Activated CD4-positive, alpha-beta memory T cell treated with anti-CD3 and anti-CD28 coated beads, Interleukin-2, amount 10 ng/mL, durations not matched to agents 7 days and 5 days (primary cell): ENCODE measurements at regions of chr15 and their contacts with region 1.

Region 1: DNA sequence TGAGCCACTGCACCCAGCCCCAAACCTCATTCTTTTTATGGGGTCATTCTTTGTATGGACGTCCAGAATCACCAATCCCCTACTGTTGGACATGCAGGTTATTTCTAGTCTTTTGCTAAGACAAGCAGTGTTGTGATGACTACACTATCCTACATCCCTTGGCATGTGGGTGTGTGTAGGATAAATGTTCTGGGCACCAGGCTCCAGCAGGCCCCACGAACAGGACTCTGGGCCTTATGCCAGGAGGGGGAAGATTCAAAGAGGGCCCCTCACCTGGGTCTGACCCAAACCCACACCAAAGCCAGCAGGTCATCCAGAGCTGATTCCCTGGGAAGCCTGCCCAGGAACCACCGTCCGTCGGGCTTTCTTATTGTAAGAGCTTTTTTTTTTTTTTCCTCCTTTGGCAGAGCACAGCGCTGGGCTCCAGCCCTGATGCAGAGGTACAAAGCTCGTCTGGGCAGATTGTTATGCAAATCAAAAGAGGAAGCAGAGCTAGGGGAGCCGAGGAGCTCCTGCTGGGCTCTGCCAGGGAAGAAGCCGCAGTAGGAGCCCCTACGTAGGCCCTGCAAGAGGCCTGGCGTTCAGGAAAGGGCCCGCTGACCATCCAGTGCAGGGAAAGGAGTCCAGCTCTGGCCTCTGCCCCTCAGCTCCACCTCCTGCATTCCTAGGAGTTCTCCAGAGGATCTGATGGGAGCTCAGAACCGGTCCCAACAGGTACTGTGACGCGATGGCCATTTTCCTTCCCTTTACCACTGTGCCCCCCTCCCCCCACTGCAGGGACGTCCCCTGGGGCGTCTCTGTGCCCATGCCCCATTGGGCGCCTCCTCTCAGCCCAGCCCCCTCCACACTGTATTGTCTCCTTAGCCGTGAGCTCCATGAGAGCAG is 29.0 kb upstream of the FURIN start:
- DNase-seq: no peak
- H3K4me3 Mint-ChIP-seq: peak overlapping the region; percentile 79
- H3K27ac Mint-ChIP-seq: peak overlapping the region; percentile 90
- H3K4me1 Mint-ChIP-seq: peaks cover 83% of the 10 kb centered on the region
- H3K27me3 Mint-ChIP-seq: no peaks in the 10 kb centered on the region

Region 2: DNA sequence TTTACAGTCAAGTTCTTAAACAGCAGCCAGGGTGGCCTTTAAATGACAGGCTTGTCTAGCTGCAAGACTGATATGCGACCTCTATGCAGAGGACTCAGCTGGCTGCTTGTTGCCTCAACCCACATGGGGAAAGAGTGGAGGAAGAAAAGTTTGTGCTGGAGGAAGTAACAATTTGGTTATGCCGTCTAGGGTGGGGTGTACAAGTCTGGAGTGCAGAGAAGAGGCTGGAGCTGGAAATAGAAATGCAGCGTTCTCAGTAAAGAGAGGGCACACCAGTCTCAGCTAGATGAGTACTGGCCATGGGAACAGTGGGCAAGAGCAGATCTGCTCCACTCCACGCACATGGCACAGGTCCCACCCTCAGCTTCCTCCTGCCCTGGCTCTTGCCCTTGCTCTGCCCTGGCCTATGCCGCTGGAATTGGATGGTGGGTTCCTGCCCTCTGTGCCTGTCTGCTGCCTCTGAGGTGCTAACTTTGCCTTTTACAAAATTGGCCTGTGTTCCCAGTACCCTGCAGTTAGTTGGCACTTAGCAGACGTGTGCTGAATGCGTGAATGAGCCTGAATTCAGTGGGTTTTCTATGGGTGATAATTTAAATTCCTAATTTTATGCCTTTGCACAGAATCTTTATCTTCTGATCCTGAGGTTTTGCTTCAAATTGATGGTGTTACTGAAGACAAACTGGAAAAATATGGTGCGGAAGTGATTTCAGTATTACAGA is 30.8 kb before region 1 on chr15:
- CTCF ChIA-PET with region 1: interaction called, 3 read pairs
- POLR2A ChIA-PET with region 1: interaction called, 120 read pairs
- DNase-seq: no peak
- H3K4me3 Mint-ChIP-seq: no peak overlapping the region
- H3K27ac Mint-ChIP-seq: peak overlapping the region; percentile 86
- H3K4me1 Mint-ChIP-seq: peaks cover 69% of the 10 kb centered on the region
- H3K27me3 Mint-ChIP-seq: no peaks in the 10 kb centered on the region

Region 3: GRCh38 chr15:90851114-90851513 is 11.7 kb after region 1 on chr15:
- CTCF ChIA-PET with region 1: interaction called, 20 read pairs
- POLR2A ChIA-PET with region 1: interaction called, 153 read pairs
- DNase-seq: peak; percentile 80
- H3K4me3 Mint-ChIP-seq: peak overlapping the region; percentile 63
- H3K27ac Mint-ChIP-seq: peak overlapping the region; percentile 91
- H3K4me1 Mint-ChIP-seq: peaks cover 77% of the 10 kb centered on the region
- H3K27me3 Mint-ChIP-seq: no peaks in the 10 kb centered on the region

Region 4: GRCh38 chr15:90860942-90861675 is 21.7 kb after region 1 on chr15:
- CTCF ChIA-PET with region 1: interaction called, 5 read pairs
- POLR2A ChIA-PET with region 1: interaction called, 25 read pairs
- DNase-seq: no peak
- H3K4me3 Mint-ChIP-seq: no peak overlapping the region
- H3K27ac Mint-ChIP-seq: no peak overlapping the region
- H3K4me1 Mint-ChIP-seq: peaks cover 65% of the 10 kb centered on the region
- H3K27me3 Mint-ChIP-seq: no peaks in the 10 kb centered on the region

Region 5: DNA sequence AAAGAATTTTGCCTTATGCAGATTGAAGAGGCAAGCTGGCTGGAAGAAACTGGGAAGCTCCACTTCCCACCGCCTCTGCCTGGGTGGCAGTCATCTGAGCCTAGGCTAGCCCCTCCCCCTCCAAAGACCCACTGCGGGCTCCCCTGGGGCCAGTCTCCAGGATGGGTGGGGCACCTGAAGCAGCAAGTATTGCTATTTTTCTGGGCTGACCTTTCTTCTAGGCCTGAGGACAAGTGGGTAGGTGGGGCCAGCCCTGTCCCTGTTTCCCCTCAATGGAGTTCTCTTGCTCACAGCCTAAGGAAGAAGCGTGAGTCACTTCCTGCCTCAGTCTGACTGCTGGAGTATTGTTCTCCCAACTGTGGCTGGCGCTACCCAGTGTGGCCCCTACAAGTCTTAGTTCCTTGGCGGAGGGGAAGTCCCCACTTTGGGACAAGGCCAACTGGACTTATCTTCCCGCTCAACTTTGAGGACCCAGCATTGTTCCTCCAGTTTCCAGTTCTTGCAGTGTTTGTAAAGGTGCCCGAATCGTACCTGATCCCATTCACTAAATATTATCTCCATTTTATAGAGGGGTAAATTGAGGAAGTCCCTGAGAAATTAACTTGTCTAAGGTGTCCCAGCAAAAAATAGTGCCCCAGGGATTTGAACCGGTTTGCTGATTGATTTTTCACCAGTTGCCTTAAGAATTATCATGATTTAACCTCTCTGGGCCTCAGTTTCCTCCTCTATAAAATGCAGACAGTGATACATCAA is 30.3 kb after region 1 on chr15:
- CTCF ChIA-PET with region 1: no interaction called
- POLR2A ChIA-PET with region 1: interaction called, 40 read pairs
- DNase-seq: peak; percentile 63
- H3K4me3 Mint-ChIP-seq: peak overlapping the region; percentile 85
- H3K27ac Mint-ChIP-seq: peak overlapping the region; percentile 91
- H3K4me1 Mint-ChIP-seq: peaks cover 59% of the 10 kb centered on the region
- H3K27me3 Mint-ChIP-seq: no peaks in the 10 kb centered on the region